ENCODE measurements at regions of chr17 and their contacts with region 1.

Region 1: DNA sequence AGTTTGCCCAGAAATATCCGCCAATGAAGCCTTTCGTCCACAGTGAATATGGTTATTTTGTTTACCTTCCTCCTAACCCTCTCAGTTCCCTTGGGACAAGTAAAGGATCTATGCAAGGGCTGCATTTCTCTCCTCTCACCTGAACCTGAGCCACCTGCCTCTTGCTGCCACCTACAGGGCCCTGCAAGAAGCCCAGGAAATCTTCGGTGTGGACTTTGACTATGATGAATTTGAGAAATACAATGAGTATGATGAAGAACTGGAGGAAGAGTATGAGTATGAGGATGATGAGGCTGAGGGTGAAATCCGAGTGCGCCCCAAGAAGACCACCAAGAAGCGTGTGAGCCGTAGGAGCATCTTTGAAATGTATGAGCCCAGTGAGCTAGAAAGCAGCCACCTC is 14.0 kb downstream of the SUPT6H start:
- DNase-seq: peak; percentile 42 to 62
- ATAC-seq: peak; percentile 81 to 82; a peak in 5 of 6 replicates
- H3K4me3 ChIP-seq: no peak overlapping the region
- H3K27ac ChIP-seq: no peak overlapping the region
- H3K4me1 ChIP-seq: no peaks in the 10 kb centered on the region
- CTCF ChIP-seq: peak; percentile 45
- EP300 ChIP-seq: no peak
- POLR2A ChIP-seq: no peak
- RAD21 ChIP-seq: peak; percentile 44 to 66; a peak in 4 of 5 replicates

Region 2: DNA sequence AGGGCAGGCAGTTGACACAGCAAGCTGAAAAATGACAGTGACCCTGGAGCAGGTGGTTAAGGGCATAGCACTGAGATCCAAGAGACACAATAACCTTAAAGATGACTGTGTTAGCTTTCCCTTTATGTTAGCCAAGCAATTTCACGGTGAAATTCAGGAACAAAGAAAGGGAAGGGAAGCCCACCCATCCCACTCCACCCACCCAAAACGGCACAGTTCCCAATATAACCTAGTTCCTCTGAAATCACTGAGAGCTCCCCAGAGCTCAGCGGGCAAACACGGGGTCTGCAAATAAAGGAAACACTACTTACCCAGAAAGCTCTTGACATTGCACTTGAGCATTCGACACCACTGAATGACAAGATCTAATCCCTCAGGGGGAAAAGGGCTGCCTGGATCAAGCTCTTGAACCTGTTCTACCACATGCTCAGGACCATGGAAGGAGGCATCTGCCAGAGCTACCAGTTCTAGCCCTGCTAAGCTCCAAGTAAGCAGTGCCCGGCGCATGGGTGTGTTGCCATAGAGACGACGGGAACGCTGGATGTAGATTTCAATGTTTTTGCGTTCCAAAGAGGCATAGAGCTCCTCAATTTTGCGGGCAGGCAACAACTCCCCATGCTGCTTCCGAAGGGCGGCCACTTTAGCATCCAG is 41.6 kb before region 1 on chr17:
- CTCF ChIA-PET with region 1: interaction called, 11 read pairs
- POLR2A ChIA-PET with region 1: no interaction called
- DNase-seq: no peak
- ATAC-seq: no peak
- H3K4me3 ChIP-seq: no peak overlapping the region
- H3K27ac ChIP-seq: no peak overlapping the region
- H3K4me1 ChIP-seq: no peaks in the 10 kb centered on the region
- CTCF ChIP-seq: no peak
- EP300 ChIP-seq: no peak
- POLR2A ChIP-seq: no peak
- RAD21 ChIP-seq: no peak

Region 3: GRCh38 chr17:28661635-28662537 is 14.1 kb before region 1 on chr17 and contains the starts of genes SDF2 and SUPT6H:
- CTCF ChIA-PET with region 1: interaction called, 28 read pairs
- POLR2A ChIA-PET with region 1: interaction called, 12 read pairs
- DNase-seq: peak; percentile 92 to 97
- ATAC-seq: peak; percentile 92 to 97
- H3K4me3 ChIP-seq: peak within 1 kb of the TSS; percentile 74
- H3K27ac ChIP-seq: peak within 1 kb of the TSS; percentile 94 to 96
- H3K4me1 ChIP-seq: peaks cover 31% of the 10 kb centered on the region
- CTCF ChIP-seq: no peak
- EP300 ChIP-seq: no peak
- POLR2A ChIP-seq: peak; percentile 90
- RAD21 ChIP-seq: no peak
- polyA plus RNA-seq, gene SDF2: 87.9 and 113 TPM in 2 replicates
- polyA plus RNA-seq, gene SUPT6H: 51.4 and 61.0 TPM in 2 replicates

Region 4: GRCh38 chr17:28765038-28765437 is 89.1 kb after region 1 on chr17:
- CTCF ChIA-PET with region 1: no interaction called
- POLR2A ChIA-PET with region 1: no interaction called
- DNase-seq: no peak
- ATAC-seq: no peak
- H3K4me3 ChIP-seq: no peak overlapping the region
- H3K27ac ChIP-seq: no peak overlapping the region
- H3K4me1 ChIP-seq: peaks cover 15% of the 10 kb centered on the region
- CTCF ChIP-seq: no peak
- EP300 ChIP-seq: no peak
- POLR2A ChIP-seq: no peak
- RAD21 ChIP-seq: no peak

Measured in A549 (cell line).